Panc1 (cell line): ENCODE measurements at regions of chr17 and their contacts with region 1.

Region 1: GRCh38 chr17:74842599-74843351 is 16.9 kb downstream of the GRIN2C start:
- DNase-seq: no peak
- ATAC-seq: peak; percentile 91
- H3K4me3 ChIP-seq: peak overlapping the region; percentile 50 to 52
- H3K27ac ChIP-seq: peak overlapping the region; percentile 66
- H3K4me1 ChIP-seq: peaks cover 12% of the 10 kb centered on the region
- H3K27me3 ChIP-seq: no peaks in the 10 kb centered on the region
- CTCF ChIP-seq: peak; percentile 94

Region 2: GRCh38 chr17:74513987-74514631 is 328.7 kb before region 1 on chr17:
- CTCF ChIA-PET with region 1: no interaction called
- POLR2A ChIA-PET with region 1: no interaction called
- in situ Hi-C with region 1: no loop called
- intact Hi-C with region 1: no loop called
- DNase-seq: peak; percentile 55
- ATAC-seq: peak; percentile 71
- H3K4me3 ChIP-seq: no peak overlapping the region
- H3K27ac ChIP-seq: no peak overlapping the region
- H3K4me1 ChIP-seq: no peaks in the 10 kb centered on the region
- H3K27me3 ChIP-seq: peaks cover 6% of the 10 kb centered on the region
- CTCF ChIP-seq: no peak

Region 3: DNA sequence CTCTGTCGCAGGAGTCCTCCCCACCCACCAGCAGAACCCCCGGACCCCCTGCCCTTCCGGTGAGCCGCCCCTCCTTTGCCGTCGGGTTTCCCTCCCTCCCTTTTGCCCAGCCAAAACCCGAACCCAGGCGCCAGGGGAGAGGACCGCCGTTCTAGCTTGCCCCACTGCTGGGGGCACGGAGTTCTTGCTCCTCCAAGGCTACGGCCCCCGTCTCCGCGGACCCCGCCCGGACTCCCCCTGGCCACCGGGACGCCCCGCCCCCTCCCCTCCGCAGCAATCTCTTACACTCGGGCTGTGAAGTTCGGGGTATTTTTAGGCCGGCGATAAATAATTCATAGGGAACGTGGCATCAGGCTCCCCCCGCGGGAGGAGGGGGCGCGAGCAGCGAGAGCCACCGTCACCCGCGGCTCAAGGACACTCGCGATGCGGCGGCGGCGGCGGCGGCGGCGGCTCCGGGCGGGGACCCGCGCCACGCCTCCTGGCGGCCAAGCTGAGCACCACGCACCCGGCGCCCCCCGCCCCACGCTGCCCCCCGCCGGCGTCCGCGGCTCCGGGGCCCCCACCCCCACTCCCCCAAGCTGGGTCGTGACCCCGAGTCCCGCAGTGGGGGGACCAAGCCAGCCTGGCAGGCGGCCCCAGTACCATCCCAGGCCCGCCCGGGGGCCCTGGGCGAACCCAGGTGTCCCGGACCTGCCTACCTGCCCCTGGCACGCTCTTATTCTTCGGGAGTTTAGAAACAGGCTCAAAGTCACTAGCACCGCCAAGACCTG is 16.9 kb after region 1 on chr17 and contains the start of gene GRIN2C:
- CTCF ChIA-PET with region 1: interaction called, 24 read pairs
- POLR2A ChIA-PET with region 1: interaction called, 5 read pairs
- in situ Hi-C with region 1: no loop called
- intact Hi-C with region 1: no loop called
- DNase-seq: no peak
- ATAC-seq: no peak
- H3K4me3 ChIP-seq: peak within 1 kb of the TSS; percentile 14 to 24
- H3K27ac ChIP-seq: no peak within 1 kb of the TSS
- H3K4me1 ChIP-seq: peaks cover 21% of the 10 kb centered on the region
- H3K27me3 ChIP-seq: peaks cover 23% of the 10 kb centered on the region
- CTCF ChIP-seq: peak; percentile 89
- total RNA-seq, gene GRIN2C: 0.10 TPM

Region 4: DNA sequence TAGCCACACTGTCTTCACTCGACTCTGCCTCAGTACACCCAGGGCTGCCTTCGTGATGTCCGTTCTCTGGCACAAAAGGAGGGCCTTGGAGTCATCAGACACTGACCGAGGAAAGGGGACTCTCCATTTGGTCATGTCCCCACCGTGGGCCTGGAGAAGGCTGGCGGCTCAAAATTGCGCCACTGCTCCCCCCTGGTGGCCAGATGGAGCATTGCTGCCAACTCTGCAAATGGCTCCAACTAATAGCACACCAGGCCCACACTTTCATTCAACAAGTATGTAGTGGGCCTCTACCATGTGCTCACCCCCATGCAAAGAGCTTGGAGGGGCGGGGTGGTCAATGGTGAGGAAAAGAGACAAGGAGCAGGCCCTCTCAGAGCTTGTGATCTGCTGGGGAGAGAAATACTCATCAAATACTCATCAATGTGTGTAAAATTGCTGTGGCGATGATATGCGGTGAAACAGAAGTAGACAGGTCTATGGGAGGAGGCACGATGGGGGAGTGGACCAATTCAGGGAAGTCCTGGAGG is 22.2 kb after region 1 on chr17:
- CTCF ChIA-PET with region 1: interaction called, 24 read pairs
- POLR2A ChIA-PET with region 1: interaction called, 5 read pairs
- in situ Hi-C with region 1: no loop called
- intact Hi-C with region 1: no loop called
- DNase-seq: peak; percentile 47
- ATAC-seq: peak; percentile 64
- H3K4me3 ChIP-seq: no peak overlapping the region
- H3K27ac ChIP-seq: no peak overlapping the region
- H3K4me1 ChIP-seq: peaks cover 18% of the 10 kb centered on the region
- H3K27me3 ChIP-seq: peaks cover 10% of the 10 kb centered on the region; the same call in 1 of the 2 replicates
- CTCF ChIP-seq: peak; percentile 98